Cardiac septum (tissue), 1 donor: ENCODE measurements at regions of chr2 and their contacts with region 1.

Region 1: GRCh38 chr2:234135720-234136221 is 85.3 kb downstream of the SPP2 start:
- DNase-seq: no peak

Region 2: GRCh38 chr2:234060236-234060635 is 75.5 kb before region 1 on chr2:
- intact Hi-C with region 1: no loop called
- DNase-seq: no peak

Region 3: DNA sequence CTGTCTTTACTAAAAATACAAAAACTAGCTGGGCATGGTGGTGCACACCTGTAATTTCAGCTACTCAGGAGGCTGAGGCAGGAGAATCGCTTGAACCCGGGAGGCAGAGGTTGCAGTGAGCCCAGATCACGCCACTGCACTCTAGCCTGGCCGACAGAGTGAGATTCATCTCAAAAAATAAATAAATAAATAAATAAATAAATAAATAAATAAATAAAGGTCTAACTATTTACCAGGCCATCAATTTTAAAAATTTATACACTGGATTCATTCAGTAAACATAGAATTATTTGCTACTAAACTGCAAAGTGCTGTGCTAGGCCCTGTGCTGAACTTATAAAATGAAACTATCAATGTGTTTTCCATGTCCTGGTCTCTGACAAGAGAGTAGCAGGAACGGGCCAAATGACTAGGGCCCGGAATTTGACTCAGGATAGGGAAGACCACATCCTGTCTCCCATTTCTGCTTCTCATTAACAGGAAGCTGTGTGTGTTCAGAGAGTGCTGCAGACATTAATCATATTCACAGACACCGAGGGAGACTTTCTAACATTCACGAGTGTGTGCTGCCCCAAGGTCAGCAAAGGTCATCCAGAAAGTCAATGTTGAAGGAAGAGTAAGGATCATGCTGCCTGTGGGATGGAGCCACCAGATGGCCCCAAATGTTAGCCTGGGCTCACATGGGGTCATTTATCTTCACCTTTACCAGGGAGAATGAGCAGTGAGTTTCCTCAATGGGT is 10.5 kb after region 1 on chr2:
- intact Hi-C with region 1: no loop called
- DNase-seq: no peak

Region 4: GRCh38 chr2:234178330-234179030 is 42.7 kb after region 1 on chr2:
- intact Hi-C with region 1: no loop called
- DNase-seq: no peak

Region 5: GRCh38 chr2:234288974-234289455 is 153.2 kb after region 1 on chr2:
- intact Hi-C with region 1: loop called (anchors 5 kb)
- DNase-seq: no peak

Region 6: DNA sequence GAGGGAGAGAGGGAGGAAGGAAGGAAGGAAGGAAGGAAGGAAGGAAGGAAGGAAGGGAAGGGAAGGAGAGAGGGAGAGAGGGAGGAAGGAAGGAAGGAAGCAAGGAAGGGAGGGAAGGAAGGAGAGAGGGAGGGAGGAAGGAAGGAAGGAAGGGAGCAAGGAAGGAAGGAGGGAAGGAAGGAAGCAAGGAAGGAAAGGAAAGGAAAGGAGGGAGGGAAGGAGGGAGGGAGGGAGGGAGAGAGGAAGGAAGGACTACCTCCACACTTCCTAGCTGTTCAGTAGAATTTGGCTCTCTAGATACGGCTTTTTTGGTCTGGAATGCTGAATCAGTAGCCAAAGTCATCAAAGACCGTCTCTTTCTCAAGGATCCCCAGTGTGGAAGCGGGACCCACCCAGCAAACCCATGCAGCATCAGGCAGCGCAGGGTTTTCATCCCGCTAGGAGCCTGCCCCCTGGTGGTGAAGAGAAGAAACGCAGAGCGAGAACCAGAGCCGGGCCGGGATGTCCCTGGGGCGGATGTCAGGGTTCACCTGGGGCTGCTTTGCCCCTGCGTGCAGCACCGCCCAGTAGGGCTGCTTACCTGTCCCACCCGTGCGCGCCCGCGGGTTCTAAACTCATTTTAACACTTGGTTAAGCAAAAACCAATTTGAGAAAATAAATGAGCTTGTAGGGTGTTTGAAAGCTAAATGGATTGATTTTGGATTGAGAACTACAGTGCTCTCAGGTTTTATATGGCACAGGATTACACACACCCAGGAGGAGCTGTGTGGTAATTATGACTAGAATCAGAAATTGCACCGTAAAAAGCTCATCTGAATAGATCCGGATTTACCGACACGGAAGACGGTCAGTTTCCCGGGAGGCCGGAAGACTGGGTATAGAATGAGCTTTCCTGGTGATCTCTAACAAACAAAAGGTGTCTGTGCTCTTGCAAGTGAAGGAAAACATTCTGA is 409.2 kb after region 1 on chr2:
- intact Hi-C with region 1: loop called (anchors 5 kb)
- DNase-seq: peak; percentile 79

Region 7: GRCh38 chr2:235116885-235117492 is 981.2 kb after region 1 on chr2:
- intact Hi-C with region 1: loop called (anchors 10 kb)
- DNase-seq: no peak